Testis (tissue), 5 donors: ENCODE measurements at regions of chr4 and their contacts with region 1.

Region 1: GRCh38 chr4:171538601-171539100 is 274.6 kb upstream of the GALNTL6 start:
- DNase-seq: no peak
- H3K4me3 ChIP-seq: no peak overlapping the region
- H3K27ac ChIP-seq: no peak overlapping the region
- H3K4me1 ChIP-seq: no peaks in the 10 kb centered on the region
- H3K27me3 ChIP-seq: no peaks in the 10 kb centered on the region
- CTCF ChIP-seq: no peak
- POLR2A ChIP-seq: no peak

Region 2: DNA sequence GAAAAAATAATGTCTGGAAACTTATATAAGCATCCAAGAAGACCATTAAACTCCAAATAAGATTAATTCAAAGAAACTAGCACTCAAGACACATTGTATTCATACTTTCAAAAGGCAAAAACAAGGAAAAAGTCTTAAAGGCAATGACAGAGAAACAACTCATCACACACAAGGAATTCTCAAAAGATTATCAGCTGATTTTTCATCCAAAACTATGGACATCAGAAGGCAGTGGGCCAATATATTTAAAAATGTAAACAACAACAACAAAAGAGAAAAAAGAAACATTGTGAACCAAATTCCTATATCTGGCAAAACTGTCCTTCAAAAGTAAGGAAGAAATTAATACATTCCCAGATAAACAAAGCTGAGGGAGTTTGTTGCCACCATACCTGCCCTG is 436.8 kb before region 1 on chr4:
- intact Hi-C with region 1: loop called (anchors 10 kb)
- DNase-seq: no peak
- H3K4me3 ChIP-seq: no peak overlapping the region
- H3K27ac ChIP-seq: no peak overlapping the region
- H3K4me1 ChIP-seq: no peaks in the 10 kb centered on the region
- H3K27me3 ChIP-seq: no peaks in the 10 kb centered on the region
- CTCF ChIP-seq: no peak
- POLR2A ChIP-seq: no peak